HCT116 (cell line): ENCODE measurements at regions of chr13 and their contacts with region 1.

Region 1: GRCh38 chr13:30865123-30866049 is 40.7 kb upstream of the MEDAG start:
- DNase-seq: peak; percentile 78
- ATAC-seq: peak; percentile 93
- H3K4me3 ChIP-seq: no peak overlapping the region
- H3K27ac ChIP-seq: peak overlapping the region; percentile 23; the same call in 1 of the 2 replicates
- H3K4me1 ChIP-seq: peaks cover 15 to 30% of the 10 kb centered on the region in 2 experiments
- H3K27me3 ChIP-seq: no peaks in the 10 kb centered on the region
- CTCF ChIP-seq: peak; percentile 82 to 97 (median 93)
- POLR2A ChIP-seq: no peak
- RAD21 ChIP-seq: peak; percentile 95

Region 2: GRCh38 chr13:30465585-30466357 is 399.6 kb before region 1 on chr13 and contains the start of gene HMGB1:
- CTCF ChIA-PET with region 1: interaction called, 4 read pairs
- POLR2A ChIA-PET with region 1: no interaction called
- RAD21 ChIA-PET with region 1: no interaction called
- intact Hi-C with region 1: loop called (anchors 5 kb)
- DNase-seq: peak; percentile 98
- ATAC-seq: peak; percentile 90
- H3K4me3 ChIP-seq: peak within 1 kb of the TSS; percentile 73 to 80
- H3K27ac ChIP-seq: peak within 1 kb of the TSS; percentile 99
- H3K4me1 ChIP-seq: peaks cover 11 to 32% of the 10 kb centered on the region in 2 experiments; a peak in 3 of 4 replicates
- H3K27me3 ChIP-seq: no peaks in the 10 kb centered on the region
- CTCF ChIP-seq: no peak
- POLR2A ChIP-seq: peak; percentile 77
- RAD21 ChIP-seq: no peak
- total RNA-seq, gene HMGB1: 678 TPM

Region 3: GRCh38 chr13:30617315-30618185 is 247.8 kb before region 1 on chr13 and contains the start of gene USPL1:
- CTCF ChIA-PET with region 1: no interaction called
- POLR2A ChIA-PET with region 1: no interaction called
- RAD21 ChIA-PET with region 1: no interaction called
- intact Hi-C with region 1: loop called (anchors 5 kb)
- DNase-seq: peak; percentile 98
- ATAC-seq: peak; percentile 91
- H3K4me3 ChIP-seq: peak within 1 kb of the TSS; percentile 92
- H3K27ac ChIP-seq: peak within 1 kb of the TSS; percentile 97
- H3K4me1 ChIP-seq: peaks cover 18 to 36% of the 10 kb centered on the region in 2 experiments
- H3K27me3 ChIP-seq: no peaks in the 10 kb centered on the region
- CTCF ChIP-seq: no peak
- POLR2A ChIP-seq: peak; percentile 58
- RAD21 ChIP-seq: no peak
- total RNA-seq, gene USPL1: 19.7 TPM

Region 4: DNA sequence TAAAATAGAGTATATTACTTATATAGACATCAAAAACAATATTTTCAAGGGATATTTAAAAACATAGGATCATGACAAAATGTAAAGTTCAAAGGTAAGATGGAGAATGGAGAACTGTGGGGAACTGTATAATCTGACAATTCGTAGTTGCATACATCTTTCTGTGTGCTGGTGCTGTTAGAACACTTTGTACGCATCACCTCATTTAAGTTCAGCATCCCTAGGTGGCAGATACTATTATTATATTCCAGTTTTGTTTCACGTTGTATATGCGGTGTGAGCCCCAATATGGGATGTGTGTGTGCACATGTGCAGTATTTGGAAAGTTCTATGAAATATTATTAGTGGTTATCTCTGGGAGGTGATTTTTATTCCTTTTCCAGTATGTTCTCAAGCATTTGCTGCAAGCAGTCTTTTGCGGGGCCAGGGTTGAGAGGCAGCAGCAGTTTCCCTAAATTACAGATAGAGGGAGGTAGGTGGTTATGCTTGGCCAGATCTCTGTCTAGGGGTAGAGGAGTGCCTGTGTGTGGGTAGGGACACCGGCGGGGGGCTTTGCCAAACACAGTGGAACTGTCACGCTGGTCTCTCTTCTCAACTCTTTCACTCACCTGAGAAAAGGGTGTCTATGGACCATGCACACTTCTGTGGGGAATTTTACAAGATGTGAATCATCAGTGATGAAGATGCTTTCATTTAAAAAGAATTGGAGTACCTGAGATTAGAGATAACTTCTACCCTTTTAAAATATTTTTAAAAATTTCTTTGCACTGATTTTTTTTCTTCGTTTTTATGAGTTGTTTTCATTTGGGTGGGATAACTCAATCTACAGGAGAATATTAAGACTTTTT is 185.7 kb before region 1 on chr13:
- CTCF ChIA-PET with region 1: interaction called, 3 read pairs
- POLR2A ChIA-PET with region 1: no interaction called
- RAD21 ChIA-PET with region 1: no interaction called
- intact Hi-C with region 1: loop called (anchors 1 kb)
- DNase-seq: no peak
- ATAC-seq: peak; percentile 86
- H3K4me3 ChIP-seq: no peak overlapping the region
- H3K27ac ChIP-seq: no peak overlapping the region
- H3K4me1 ChIP-seq: no peaks in the 10 kb centered on the region
- H3K27me3 ChIP-seq: no peaks in the 10 kb centered on the region
- CTCF ChIP-seq: peak; percentile 43 to 64 (median 56); a peak in 5 of 6 replicates
- POLR2A ChIP-seq: no peak
- RAD21 ChIP-seq: peak; percentile 68

Region 5: GRCh38 chr13:31686670-31687425 is 821.5 kb after region 1 on chr13:
- CTCF ChIA-PET with region 1: no interaction called
- POLR2A ChIA-PET with region 1: no interaction called
- RAD21 ChIA-PET with region 1: no interaction called
- intact Hi-C with region 1: no loop called
- DNase-seq: no peak
- ATAC-seq: no peak
- H3K4me3 ChIP-seq: no peak overlapping the region
- H3K27ac ChIP-seq: no peak overlapping the region
- H3K4me1 ChIP-seq: no peaks in the 10 kb centered on the region
- H3K27me3 ChIP-seq: peaks cover 55% of the 10 kb centered on the region
- CTCF ChIP-seq: no peak
- POLR2A ChIP-seq: no peak
- RAD21 ChIP-seq: no peak